ENCODE measurements at regions of chr4 and their contacts with region 1.

Region 1: DNA sequence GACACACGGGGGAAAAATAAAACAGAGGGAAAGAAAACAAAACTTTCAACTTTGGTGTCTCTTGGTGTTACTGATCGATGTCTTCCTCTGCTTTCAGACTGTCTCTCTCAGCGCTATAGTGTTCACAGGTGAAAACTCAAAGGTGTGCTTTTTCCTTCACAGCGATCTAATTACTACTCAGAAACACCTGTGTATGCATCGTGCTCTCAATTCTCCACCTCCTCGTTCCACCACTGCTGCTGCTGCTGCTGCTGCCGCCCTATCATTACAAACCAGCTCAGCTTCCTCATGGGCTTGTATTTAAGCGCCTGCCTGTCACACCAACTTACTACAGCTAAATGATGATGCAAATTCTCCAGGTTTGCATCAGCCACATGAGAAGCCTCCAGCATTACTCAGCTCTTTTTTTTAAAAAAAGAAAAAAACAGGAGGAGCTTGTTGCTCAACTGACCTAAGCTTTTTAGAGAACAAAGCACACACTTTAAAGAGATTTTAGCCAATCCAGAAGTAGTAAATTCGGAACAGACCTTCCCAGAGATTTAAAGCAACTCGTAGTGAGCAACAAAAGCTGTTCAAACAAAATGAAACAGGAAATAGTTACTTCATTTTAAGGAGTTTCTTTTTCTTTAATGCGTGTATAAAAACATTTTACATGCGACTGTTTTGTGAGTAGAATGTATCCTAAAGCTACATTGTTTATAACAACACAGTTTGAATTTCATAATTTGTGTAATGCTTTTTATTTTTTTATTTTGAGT is at the start of gene SLC7A11:
- DNase-seq: peak; percentile 88 to 90
- H3K4me3 ChIP-seq: peak within 1 kb of the TSS; percentile 44
- H3K4me3 Mint-ChIP-seq: peak within 1 kb of the TSS; percentile 82
- H3K27ac Mint-ChIP-seq: peak within 1 kb of the TSS; percentile 90
- H3K4me1 ChIP-seq: peaks cover 15% of the 10 kb centered on the region
- H3K4me1 Mint-ChIP-seq: no peaks in the 10 kb centered on the region
- H3K27me3 ChIP-seq: no peaks in the 10 kb centered on the region
- H3K27me3 Mint-ChIP-seq: no peaks in the 10 kb centered on the region
- CTCF ChIP-seq: no peak
- total RNA-seq, gene SLC7A11: 32.9 and 41.1 TPM in 2 replicates

Region 2: GRCh38 chr4:138199568-138200235 is 42.6 kb before region 1 on chr4:
- CTCF ChIA-PET with region 1: no interaction called
- POLR2A ChIA-PET with region 1: interaction called, 7 read pairs
- intact Hi-C with region 1: loop called (anchors 1 kb)
- DNase-seq: peak; percentile 77 to 83
- H3K4me3 ChIP-seq: no peak overlapping the region
- H3K4me3 Mint-ChIP-seq: peak overlapping the region; percentile 56
- H3K27ac Mint-ChIP-seq: peak overlapping the region; percentile 79
- H3K4me1 ChIP-seq: peaks cover 27% of the 10 kb centered on the region
- H3K4me1 Mint-ChIP-seq: peaks cover 33% of the 10 kb centered on the region
- H3K27me3 ChIP-seq: no peaks in the 10 kb centered on the region
- H3K27me3 Mint-ChIP-seq: no peaks in the 10 kb centered on the region
- CTCF ChIP-seq: no peak

Region 3: DNA sequence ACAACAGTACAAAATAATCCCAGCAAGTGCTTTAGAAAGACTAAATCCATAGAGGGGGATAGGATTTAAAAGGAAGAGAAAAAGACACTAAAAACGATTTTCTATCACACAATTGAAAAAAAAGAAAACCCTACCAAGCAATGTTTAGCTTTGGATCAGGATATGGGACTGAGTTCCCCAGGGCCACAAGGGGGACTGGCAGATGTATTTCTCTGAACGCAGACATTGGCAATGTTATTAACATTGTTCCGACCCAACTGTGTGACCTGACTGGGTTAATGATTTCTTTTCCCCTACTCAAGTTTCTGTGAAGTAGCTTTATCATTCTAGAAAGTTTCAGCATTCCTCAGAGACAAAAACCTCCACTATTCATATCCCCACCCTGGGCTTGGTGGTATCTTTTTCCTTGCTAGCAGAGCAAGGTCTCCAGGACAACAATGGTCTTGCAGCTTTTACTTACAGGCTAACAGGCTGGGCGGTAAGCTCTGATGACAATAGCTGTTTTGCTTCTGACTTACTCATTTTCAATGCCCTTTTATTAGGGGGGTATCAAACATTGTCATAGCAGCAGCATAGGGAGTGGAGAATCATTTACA is 25.9 kb before region 1 on chr4:
- CTCF ChIA-PET with region 1: no interaction called
- POLR2A ChIA-PET with region 1: interaction called, 3 read pairs
- intact Hi-C with region 1: loop called (anchors 1 kb)
- DNase-seq: peak in 1 of 2 experiments; percentile 17
- H3K4me3 ChIP-seq: no peak overlapping the region
- H3K4me3 Mint-ChIP-seq: no peak overlapping the region
- H3K27ac Mint-ChIP-seq: peak overlapping the region; percentile 50
- H3K4me1 ChIP-seq: peaks cover 14% of the 10 kb centered on the region
- H3K4me1 Mint-ChIP-seq: peaks cover 14% of the 10 kb centered on the region
- H3K27me3 ChIP-seq: no peaks in the 10 kb centered on the region
- H3K27me3 Mint-ChIP-seq: no peaks in the 10 kb centered on the region
- CTCF ChIP-seq: peak in 1 of 2 experiments; percentile 23

Region 4: DNA sequence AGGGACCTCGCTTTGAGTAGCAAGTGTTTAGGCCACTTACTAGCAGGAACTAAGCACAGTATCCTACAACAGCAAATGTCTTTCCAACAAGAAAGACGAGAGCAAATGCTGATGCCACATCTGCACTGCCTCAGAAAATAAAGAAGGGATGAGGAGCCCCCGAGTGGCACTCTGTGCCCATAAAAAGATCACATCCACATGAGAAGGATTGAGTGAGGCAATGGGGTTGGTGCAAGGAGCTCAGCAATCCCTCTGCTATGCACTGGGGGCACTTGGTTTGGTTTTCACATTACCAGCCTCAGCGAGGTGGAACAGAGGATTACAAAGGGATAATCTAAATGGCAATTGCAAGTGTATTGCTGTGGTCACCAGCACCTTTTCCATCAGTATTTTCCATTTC is 252.7 kb after region 1 on chr4:
- CTCF ChIA-PET with region 1: no interaction called
- POLR2A ChIA-PET with region 1: no interaction called
- intact Hi-C with region 1: loop called (anchors 5 kb)
- DNase-seq: peak in 1 of 2 experiments; percentile 19
- H3K4me3 ChIP-seq: no peak overlapping the region
- H3K4me3 Mint-ChIP-seq: no peak overlapping the region
- H3K27ac Mint-ChIP-seq: no peak overlapping the region
- H3K4me1 ChIP-seq: no peaks in the 10 kb centered on the region
- H3K4me1 Mint-ChIP-seq: no peaks in the 10 kb centered on the region
- H3K27me3 ChIP-seq: no peaks in the 10 kb centered on the region
- H3K27me3 Mint-ChIP-seq: peaks cover 5% of the 10 kb centered on the region
- CTCF ChIP-seq: no peak

Region 5: DNA sequence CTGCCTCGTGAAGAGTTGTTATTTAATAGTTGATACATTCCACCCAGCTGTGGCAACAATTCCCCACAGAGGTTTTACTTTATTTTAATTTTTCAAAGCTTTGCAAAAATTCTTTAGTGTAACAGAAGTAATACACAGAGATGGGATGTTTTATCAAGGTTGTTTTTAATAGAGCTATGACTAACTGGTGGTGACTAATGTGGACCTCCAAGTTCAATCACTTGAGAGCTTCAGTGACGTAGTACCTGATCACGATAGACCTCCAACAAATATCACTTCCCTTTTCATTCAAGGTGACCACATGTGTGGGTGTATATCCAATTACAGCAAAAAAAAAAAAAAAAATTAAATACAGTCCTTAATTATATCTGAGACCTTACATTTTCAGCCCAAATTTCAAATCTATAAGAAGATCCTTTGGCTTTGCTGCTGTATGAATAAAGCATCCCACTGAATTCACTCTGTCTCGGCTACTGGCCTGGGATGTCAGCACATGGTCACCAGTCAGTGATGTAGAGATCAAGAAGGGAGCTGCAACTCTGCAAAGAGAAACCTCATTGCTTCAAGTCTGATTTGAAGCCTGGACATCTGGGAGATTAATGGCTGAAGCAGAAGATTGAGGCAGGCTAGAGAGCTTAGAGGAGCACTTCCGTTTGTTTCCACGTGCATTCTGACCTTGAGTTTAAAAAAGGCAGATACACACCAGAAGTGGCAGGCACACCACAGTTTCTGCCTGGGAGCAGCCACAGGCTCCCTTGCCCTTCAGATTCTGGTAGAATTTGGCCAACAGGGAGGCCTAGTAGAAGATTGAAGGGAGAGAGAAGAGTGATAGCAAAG is 427.4 kb after region 1 on chr4:
- CTCF ChIA-PET with region 1: no interaction called
- POLR2A ChIA-PET with region 1: no interaction called
- intact Hi-C with region 1: loop called (anchors 10 kb)
- DNase-seq: no peak
- H3K4me3 ChIP-seq: no peak overlapping the region
- H3K4me3 Mint-ChIP-seq: no peak overlapping the region
- H3K27ac Mint-ChIP-seq: no peak overlapping the region
- H3K4me1 ChIP-seq: peaks cover 11% of the 10 kb centered on the region
- H3K4me1 Mint-ChIP-seq: peaks cover 10% of the 10 kb centered on the region
- H3K27me3 ChIP-seq: no peaks in the 10 kb centered on the region
- H3K27me3 Mint-ChIP-seq: no peaks in the 10 kb centered on the region
- CTCF ChIP-seq: no peak